ENCODE measurements at regions of chr3 and their contacts with region 1.

Region 1: DNA sequence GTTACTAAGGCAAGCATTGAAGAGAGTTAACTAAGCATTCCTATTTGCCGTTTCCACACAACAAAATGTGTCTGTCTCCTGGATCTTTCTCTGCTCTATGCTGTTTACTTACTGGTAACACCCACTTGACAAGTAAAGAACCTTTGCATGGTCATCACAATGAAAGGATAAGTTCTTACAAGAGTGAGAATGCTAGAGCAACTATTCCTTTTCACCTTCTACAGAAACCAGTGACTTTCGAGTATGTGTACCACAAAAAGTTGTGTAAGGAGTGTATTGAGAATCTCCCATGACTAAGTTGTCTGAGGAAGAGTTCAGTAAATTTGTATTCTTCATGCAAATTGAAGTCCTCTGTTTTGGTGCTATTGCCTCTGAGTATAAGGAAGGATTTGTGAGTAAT is 10.8 kb downstream of the TIPARP start:
- DNase-seq: no peak
- H3K4me3 Mint-ChIP-seq: peak overlapping the region; percentile 59
- H3K27ac Mint-ChIP-seq: peak overlapping the region; percentile 66
- H3K4me1 Mint-ChIP-seq: peaks cover 73% of the 10 kb centered on the region
- H3K27me3 Mint-ChIP-seq: no peaks in the 10 kb centered on the region

Region 2: DNA sequence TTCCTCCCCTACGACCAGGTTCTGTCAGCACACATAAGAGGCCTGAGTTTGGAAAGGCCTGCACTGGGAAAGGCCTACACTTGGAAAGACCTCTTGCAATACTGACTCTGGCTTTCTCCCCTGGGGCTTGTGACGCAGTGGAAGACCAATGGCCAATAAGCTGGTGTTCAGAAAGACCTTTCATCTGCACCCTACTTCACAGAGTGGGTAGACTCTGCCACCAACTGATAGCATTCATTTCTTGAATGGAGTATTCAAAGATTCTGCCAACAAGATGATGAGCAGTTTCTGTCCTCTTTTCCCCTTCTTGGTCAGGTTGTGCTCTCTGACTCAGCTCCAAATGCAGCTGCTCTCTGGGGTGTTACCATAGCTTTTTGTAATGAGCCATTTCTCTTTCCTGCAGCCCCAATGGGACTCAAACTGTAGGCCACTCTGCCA is 38.0 kb after region 1 on chr3:
- intact Hi-C with region 1: loop called (anchors 5 kb)
- DNase-seq: no peak
- H3K4me3 Mint-ChIP-seq: no peak overlapping the region
- H3K27ac Mint-ChIP-seq: no peak overlapping the region
- H3K4me1 Mint-ChIP-seq: peaks cover 13% of the 10 kb centered on the region
- H3K27me3 Mint-ChIP-seq: no peaks in the 10 kb centered on the region

Region 3: GRCh38 chr3:156751461-156752025 is 66.3 kb after region 1 on chr3:
- intact Hi-C with region 1: no loop called
- DNase-seq: no peak
- H3K4me3 Mint-ChIP-seq: no peak overlapping the region
- H3K27ac Mint-ChIP-seq: no peak overlapping the region
- H3K4me1 Mint-ChIP-seq: peaks cover 1% of the 10 kb centered on the region
- H3K27me3 Mint-ChIP-seq: peaks cover 17% of the 10 kb centered on the region